ENCODE measurements at regions of chr3 and their contacts with region 1.

Region 1: DNA sequence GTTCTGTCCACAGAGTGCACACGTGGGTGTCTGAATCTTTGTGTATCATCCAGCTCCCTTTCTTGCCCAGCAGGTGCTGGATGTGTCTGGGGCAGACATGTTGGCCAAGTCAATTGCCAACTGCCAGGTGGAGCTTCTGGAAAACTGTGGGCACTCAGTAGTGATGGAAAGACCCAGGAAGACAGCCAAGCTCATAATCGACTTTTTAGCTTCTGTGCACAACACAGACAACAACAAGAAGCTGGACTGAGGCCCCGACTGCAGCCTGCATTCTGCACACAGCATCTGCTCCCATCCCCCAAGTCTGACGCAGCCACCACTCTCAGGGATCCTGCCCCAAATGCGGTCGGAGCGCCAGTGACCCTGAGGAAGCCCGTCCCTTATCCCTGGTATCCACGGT is 12.5 kb upstream of the RPP14 start:
- DNase-seq: no peak
- ATAC-seq: no peak

Region 2: DNA sequence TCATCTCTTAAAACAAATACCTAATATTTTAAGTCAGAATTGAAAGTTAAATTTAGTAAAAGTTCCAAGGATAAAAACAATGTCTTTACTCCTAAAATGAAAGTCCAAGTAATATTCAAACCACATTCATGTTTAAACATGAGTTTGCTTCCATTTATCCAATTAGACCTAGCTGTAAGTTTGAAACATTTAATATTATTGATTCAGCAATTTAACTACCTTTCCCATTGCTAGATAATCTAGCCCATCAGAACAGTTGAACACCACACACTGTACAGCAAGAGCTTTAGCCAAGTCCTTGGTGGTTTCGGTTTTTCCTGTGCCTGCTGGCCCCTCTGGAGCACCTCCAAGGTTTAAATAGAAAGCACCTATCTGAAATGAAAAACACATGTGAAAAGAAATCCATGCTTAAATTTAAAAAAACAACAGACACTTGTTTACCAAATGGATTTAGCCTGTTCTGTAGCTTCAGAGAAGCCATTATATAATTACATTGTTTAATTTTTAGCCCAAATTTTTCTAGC is 847.1 kb before region 1 on chr3:
- intact Hi-C with region 1: loop called (anchors 5 kb)
- DNase-seq: no peak
- ATAC-seq: no peak

Region 3: DNA sequence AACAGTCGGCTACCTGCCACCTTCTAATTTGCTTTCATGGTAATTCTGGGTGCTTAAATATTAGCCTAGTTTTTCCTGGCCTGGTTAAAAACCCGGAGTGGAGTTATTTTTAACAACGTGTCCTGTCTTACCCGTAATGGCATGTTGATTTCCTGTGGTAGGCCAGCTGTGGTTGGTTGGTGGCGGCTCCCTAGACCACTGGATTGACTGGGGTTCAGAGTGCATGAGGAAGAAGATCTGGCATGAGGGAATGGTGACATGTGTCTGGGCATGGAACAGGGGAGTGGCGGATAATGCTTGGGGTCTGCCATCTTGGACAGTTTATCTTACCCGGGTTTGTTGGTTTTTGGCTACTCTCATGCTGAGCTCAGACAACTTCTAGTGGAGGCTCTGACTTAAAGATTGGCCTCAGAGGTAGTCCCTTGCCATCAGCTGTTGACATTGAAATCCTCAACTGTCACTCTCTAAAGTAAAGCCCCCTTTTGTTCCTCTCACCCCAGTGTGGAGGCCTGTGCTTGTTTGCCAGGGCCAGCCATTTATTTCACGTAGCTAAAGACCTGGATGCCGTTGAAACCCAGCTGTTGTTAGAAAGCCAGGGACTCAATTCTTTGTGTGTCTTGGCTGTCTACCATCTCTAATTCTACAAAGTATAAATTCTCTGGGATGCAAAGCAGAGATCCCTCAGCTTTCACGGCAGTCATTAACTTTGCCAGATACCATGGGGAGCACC is 164.3 kb before region 1 on chr3:
- intact Hi-C with region 1: no loop called
- DNase-seq: no peak
- ATAC-seq: no peak